Cardiac septum (tissue), 1 donor: ENCODE measurements at regions of chr17 and their contacts with region 1.

Region 1: GRCh38 chr17:29148790-29149430 is 31.3 kb downstream of the MYO18A start:
- DNase-seq: peak; percentile 97

Region 2: DNA sequence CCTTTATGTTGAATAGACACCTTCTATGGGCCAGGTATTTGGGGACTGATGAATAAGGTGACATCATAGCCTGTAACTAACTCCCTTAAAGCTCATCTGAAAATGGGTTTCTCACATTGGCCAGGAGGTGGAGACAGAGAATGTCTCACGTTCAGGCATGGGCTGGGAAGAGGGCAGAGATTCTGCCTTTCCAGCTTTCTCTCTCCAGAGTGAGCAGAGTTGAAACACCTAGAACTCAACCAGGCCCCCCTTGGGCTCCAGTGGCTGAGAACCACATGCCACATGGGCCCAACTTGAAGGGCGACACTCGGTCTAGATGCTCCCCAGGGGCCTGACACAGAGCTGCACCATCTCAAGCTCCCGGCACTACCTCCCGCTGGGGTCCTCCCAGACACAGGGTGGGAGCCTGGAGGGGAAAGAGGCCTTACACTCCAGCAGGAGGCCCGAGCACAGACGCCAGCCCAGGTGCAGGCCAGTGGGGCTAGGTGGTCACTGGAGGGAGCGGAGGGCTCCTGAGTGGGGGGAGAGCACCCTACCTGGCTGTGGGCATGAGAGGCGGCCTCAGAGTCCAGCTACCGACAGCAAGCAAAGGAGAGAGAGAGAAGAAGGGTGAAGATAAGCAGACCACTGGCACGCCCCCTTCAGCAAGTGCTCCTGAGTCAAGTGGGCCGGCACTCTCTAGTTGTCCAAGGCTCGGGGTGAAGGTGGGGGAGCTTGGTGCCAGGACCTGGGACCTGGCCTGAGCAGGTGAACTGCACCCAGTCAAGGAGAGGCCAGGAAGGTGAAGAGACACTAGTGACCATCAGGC is 24.6 kb before region 1 on chr17:
- intact Hi-C with region 1: loop called (anchors 2 kb)
- DNase-seq: no peak

Region 3: GRCh38 chr17:29180034-29180787 is 31.3 kb after region 1 on chr17 and contains the start of gene MYO18A:
- intact Hi-C with region 1: loop called (anchors 1 kb)
- DNase-seq: peak; percentile 93
- total RNA-seq, gene MYO18A: 317 TPM

Region 4: GRCh38 chr17:29219378-29220047 is 70.6 kb after region 1 on chr17:
- intact Hi-C with region 1: loop called (anchors 2 kb)
- DNase-seq: peak; percentile 80